Naive thymus-derived CD4-positive, alpha-beta T cell (primary cell): ENCODE measurements at regions of chr9 and their contacts with region 1.

Region 1: GRCh38 chr9:27726244-27727081 is 153.2 kb upstream of the C9orf72 start:
- DNase-seq: peak in 7 of 9 donors; percentile 10 to 50 (median 40)
- ATAC-seq: peak; percentile 73
- H3K4me3 ChIP-seq: no peak overlapping the region
- H3K4me3 Mint-ChIP-seq: peak overlapping the region in 1 of 10 donors; percentile 6
- H3K27ac ChIP-seq: no peak overlapping the region
- H3K27ac Mint-ChIP-seq: no peak overlapping the region
- H3K4me1 ChIP-seq: no peaks in the 10 kb centered on the region
- H3K4me1 Mint-ChIP-seq: peaks cover 0 to 5% (median 0%) of the 10 kb centered on the region in 7 donors
- H3K27me3 ChIP-seq: no peaks in the 10 kb centered on the region
- H3K27me3 Mint-ChIP-seq: peaks cover 4 to 20% (median 12%) of the 10 kb centered on the region in 5 donors

Region 2: DNA sequence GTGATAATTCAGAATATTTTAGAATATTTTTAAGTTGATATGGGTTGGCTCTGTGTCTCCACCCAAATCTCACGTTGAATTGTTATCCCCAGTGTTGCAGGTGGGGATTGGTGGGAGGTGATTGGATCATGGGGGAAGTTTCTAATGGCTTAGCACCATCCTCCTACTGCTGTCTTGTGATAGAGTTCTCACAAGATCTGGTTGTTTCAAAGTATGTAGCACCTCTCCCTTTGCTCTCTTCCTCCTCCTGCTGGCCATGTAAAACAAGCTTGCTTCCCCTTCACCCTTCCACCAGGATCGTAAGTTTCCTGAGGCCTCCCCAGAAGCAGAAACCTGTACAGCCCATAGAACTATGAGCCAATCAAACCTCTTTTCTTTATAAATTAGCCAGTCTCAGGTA is 61.4 kb after region 1 on chr9:
- CTCF ChIA-PET with region 1: no interaction called
- POLR2A ChIA-PET with region 1: no interaction called
- intact Hi-C with region 1: loop called in 1 of 2 experiments (anchors 2 kb)
- DNase-seq: no peak
- ATAC-seq: no peak
- H3K4me3 ChIP-seq: no peak overlapping the region
- H3K4me3 Mint-ChIP-seq: no peak overlapping the region
- H3K27ac ChIP-seq: no peak overlapping the region
- H3K27ac Mint-ChIP-seq: no peak overlapping the region
- H3K4me1 ChIP-seq: no peaks in the 10 kb centered on the region
- H3K4me1 Mint-ChIP-seq: peaks cover 0 to 13% (median 0%) of the 10 kb centered on the region in 7 donors
- H3K27me3 ChIP-seq: no peaks in the 10 kb centered on the region
- H3K27me3 Mint-ChIP-seq: peaks cover 10 to 34% (median 15%) of the 10 kb centered on the region in 5 donors

Region 3: GRCh38 chr9:27888661-27889295 is 162.3 kb after region 1 on chr9:
- CTCF ChIA-PET with region 1: no interaction called
- POLR2A ChIA-PET with region 1: no interaction called
- intact Hi-C with region 1: loop called in 1 of 2 experiments (anchors 2 kb)
- DNase-seq: peak in 1 of 9 donors; percentile 53
- ATAC-seq: peak; percentile 49
- H3K4me3 ChIP-seq: no peak overlapping the region
- H3K4me3 Mint-ChIP-seq: no peak overlapping the region
- H3K27ac ChIP-seq: no peak overlapping the region
- H3K27ac Mint-ChIP-seq: no peak overlapping the region
- H3K4me1 ChIP-seq: no peaks in the 10 kb centered on the region
- H3K4me1 Mint-ChIP-seq: no peaks in the 10 kb centered on the region
- H3K27me3 ChIP-seq: no peaks in the 10 kb centered on the region
- H3K27me3 Mint-ChIP-seq: peaks cover 0 to 5% (median 3%) of the 10 kb centered on the region in 5 donors

Region 4: DNA sequence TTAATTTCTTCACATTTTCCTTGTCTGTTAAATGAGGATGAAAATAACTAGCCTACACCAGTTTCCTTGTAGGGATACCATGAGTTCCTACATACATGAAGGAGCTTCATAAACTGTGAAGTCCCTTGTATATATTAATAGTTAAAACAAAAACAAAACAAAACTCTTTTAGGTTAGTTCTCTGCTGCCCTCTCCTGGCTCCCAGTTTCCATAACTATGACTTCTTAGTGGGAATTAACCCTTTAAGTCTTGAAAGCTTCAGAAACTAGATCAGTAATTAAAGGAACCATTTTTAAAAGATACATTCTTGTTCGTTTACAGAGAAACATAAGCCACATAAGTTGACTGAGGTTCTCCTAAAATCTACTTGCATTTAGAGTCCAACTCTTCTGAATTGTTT is 346.8 kb after region 1 on chr9:
- CTCF ChIA-PET with region 1: no interaction called
- POLR2A ChIA-PET with region 1: no interaction called
- intact Hi-C with region 1: loop called in 1 of 2 experiments (anchors 1 kb)
- DNase-seq: no peak
- ATAC-seq: no peak
- H3K4me3 ChIP-seq: no peak overlapping the region
- H3K4me3 Mint-ChIP-seq: no peak overlapping the region
- H3K27ac ChIP-seq: no peak overlapping the region
- H3K27ac Mint-ChIP-seq: no peak overlapping the region
- H3K4me1 ChIP-seq: no peaks in the 10 kb centered on the region
- H3K4me1 Mint-ChIP-seq: no peaks in the 10 kb centered on the region
- H3K27me3 ChIP-seq: no peaks in the 10 kb centered on the region
- H3K27me3 Mint-ChIP-seq: no peaks in the 10 kb centered on the region